ENCODE measurements at regions of chr17 and their contacts with region 1.

Region 1: DNA sequence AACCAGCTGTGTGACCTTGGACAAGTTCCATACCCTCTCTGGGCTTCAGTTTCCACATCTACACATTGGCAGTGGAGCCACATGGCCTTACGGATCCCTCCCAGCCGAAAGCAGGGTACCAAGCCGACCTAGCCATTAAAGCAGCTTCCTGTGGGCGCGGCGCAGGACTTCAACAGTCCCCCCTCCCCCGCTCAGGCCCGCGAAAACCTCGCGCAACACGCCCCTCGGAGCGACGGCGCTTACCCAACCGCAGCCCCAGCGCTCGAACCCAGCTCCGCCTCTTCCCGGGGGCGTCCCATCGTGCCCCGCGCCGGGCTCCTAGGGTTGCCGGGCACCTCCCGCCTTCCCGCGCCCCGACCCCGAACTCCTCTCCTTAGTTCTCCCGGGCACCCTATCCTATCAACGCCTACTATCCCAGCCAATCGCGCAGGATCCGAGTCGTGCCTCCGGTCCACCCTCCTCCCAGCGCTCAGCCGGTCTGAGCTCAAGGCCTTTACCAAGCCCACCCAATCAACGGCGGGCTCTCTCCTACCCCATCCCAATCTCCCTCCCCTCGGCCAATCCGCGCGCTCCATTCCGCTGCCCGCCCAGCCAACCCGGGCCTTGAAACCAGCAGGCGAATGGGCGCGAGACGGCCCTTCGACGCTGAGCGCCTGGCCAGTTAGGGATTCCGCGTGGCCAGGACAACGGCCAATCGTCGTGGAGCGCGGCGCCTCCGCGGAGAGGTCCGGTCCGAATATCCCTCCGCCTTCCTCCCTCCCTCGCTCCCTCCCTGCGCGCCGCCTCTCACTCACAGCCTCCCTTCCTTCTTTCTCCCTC is at the start of gene KPNB1:
- DNase-seq: peak; percentile 85 to 97 (median 97)
- ATAC-seq: peak; percentile 90
- H3K4me3 ChIP-seq: peak within 1 kb of the TSS; percentile 55
- H3K4me3 Mint-ChIP-seq: peak within 1 kb of the TSS; percentile 92 to 100 (median 99)
- H3K27ac ChIP-seq: peak within 1 kb of the TSS; percentile 80
- H3K27ac Mint-ChIP-seq: peak within 1 kb of the TSS; percentile 92 to 100 (median 98)
- H3K4me1 ChIP-seq: peaks cover 26 to 34% of the 10 kb centered on the region in 2 donors
- H3K4me1 Mint-ChIP-seq: peaks cover 40 to 67% (median 53%) of the 10 kb centered on the region in 7 donors
- H3K27me3 ChIP-seq: no peaks in the 10 kb centered on the region
- H3K27me3 Mint-ChIP-seq: no peaks in the 10 kb centered on the region
- total RNA-seq, gene KPNB1: 185 to 465 (median 255) TPM

Region 2: DNA sequence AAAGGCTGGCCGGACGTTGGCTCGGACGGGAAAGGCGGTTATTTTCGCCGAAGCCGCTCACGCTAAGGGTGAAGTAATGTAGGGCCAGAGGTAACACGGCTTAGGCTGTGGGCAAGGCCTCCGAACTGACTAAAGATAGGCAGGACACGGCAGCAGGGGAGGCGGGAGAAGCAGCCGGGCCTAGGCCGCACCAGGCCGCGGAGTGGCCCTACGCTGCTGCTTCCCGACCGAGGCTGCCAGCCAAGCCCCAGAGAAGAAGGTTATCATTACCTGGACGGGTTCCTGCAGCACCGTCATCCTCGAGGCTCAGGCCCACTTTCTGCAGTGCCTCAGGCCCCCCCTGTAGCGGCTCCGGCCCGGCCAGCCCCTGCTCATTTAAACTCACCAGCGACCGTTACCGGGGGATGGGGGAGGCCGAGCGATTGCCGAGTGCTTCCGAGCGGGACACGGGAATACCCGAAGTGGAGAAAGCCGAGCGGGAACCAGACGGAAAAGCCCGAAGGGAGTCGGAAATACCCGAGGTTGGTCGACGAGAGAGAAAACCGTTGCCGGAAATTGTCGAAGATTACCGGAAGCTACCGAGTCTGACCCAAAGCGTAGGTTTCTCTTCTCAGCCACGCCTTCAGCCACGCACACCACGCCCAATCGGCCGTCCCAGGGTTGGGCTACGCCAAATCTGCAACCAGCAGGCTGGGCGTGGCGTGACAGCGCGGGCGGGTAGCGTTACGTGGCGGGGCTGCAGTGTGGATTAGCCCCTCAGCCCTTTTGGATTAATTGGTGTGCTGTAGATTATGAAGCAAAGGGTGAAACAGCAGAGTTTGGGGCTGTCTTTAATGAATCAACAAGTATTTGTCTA is 460.3 kb before region 1 on chr17 and contains the start of gene CDC27:
- CTCF ChIA-PET with region 1: no interaction called
- POLR2A ChIA-PET with region 1: interaction called, 4 read pairs
- intact Hi-C with region 1: loop called in 1 of 2 experiments (anchors 2 kb)
- DNase-seq: peak; percentile 98 to 100 (median 99)
- ATAC-seq: peak; percentile 97
- H3K4me3 ChIP-seq: peak within 1 kb of the TSS; percentile 92
- H3K4me3 Mint-ChIP-seq: peak within 1 kb of the TSS; percentile 89 to 97 (median 94)
- H3K27ac ChIP-seq: peak within 1 kb of the TSS; percentile 95
- H3K27ac Mint-ChIP-seq: peak within 1 kb of the TSS; percentile 48 to 96 (median 94)
- H3K4me1 ChIP-seq: peaks cover 9 to 31% of the 10 kb centered on the region in 2 donors
- H3K4me1 Mint-ChIP-seq: peaks cover 34 to 59% (median 41%) of the 10 kb centered on the region in 7 donors
- H3K27me3 ChIP-seq: no peaks in the 10 kb centered on the region
- H3K27me3 Mint-ChIP-seq: no peaks in the 10 kb centered on the region
- total RNA-seq, gene CDC27: 47.4 to 98.3 (median 67.2) TPM

Region 3: DNA sequence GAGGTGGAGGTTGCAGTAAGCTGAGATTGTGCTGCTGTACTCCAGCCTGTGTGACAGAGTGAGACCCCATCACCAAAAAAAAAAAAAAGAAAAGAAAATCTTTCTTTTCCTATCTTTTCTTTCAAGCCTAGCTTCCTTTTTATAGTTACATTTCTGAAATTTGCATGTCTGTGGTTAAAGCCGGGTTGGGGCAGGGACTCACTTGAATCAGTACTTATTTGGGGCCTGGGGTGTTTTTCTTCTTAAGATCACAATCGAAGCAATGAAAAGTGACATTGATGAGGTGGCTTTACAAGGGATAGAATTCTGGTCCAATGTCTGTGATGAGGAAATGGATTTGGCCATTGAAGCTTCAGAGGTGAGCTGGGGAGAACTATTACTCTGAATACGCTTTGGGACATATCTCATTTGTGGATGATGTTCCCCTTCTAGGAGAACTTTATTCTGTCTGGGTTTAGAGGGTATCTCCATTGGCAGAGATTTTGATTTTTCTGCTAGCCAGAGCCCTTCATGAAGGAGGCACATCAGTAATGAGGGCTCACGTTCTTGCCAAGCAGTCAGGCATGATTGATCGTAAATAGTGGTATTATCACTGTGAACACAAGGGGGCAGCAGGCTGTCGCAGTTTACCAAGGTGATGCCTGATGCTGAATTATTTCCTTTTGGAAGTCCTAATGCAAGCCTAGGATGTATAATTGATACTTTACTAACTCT is 14.7 kb after region 1 on chr17:
- CTCF ChIA-PET with region 1: interaction called, 18 read pairs
- POLR2A ChIA-PET with region 1: interaction called, 92 read pairs
- intact Hi-C with region 1: loop called (anchors 1 kb)
- DNase-seq: peak; percentile 19 to 65 (median 56)
- ATAC-seq: peak; percentile 81
- H3K4me3 ChIP-seq: no peak overlapping the region
- H3K4me3 Mint-ChIP-seq: peak overlapping the region in 3 of 10 donors; percentile 1 to 38 (median 25)
- H3K27ac ChIP-seq: peak overlapping the region; percentile 5
- H3K27ac Mint-ChIP-seq: peak overlapping the region; percentile 25 to 92 (median 66)
- H3K4me1 ChIP-seq: peaks cover 8 to 15% of the 10 kb centered on the region in 2 donors
- H3K4me1 Mint-ChIP-seq: peaks cover 8 to 48% (median 22%) of the 10 kb centered on the region in 7 donors
- H3K27me3 ChIP-seq: no peaks in the 10 kb centered on the region
- H3K27me3 Mint-ChIP-seq: no peaks in the 10 kb centered on the region

Region 4: DNA sequence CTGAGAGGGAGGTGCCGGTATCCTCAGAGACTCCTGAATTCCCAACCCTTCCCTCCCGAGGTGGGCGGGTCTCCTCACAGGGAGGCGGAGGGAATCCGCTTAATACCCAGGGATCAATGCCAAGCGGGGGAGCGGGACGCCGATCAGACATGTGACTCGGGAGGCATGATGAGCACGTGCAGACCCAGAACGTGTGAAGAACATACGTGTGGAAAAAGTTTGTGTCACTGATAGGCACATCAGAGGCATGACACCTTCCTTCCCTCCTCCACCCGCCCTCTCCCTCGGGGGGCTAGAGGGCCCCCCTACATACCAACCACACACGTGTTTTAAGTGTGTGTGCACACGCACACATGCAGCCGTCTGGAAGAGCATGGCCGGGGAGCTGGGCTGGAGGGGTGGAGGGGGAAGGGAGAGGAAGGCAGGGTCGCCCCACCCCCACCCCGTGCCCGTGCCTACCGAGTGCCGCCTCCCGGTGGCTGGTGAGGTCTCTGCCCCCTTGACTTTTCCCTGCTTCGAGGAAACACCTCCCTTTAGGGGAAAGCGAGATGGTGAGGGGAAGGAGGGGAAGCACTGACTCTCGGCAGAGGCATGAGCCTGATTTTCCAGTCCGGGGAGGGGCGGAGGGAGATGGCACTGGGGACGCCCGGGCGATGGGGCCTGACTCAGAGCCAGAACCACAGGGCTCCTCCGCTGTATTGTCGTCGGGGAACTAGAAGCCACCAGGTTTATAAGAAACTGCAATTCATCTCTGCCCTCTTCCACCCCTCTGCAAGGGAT is 71.6 kb after region 1 on chr17:
- CTCF ChIA-PET with region 1: no interaction called
- POLR2A ChIA-PET with region 1: no interaction called
- intact Hi-C with region 1: no loop called
- DNase-seq: peak in 2 of 9 donors; percentile 69 to 93
- ATAC-seq: peak; percentile 69
- H3K4me3 ChIP-seq: peak overlapping the region; percentile 29
- H3K4me3 Mint-ChIP-seq: peak overlapping the region in 6 of 10 donors; percentile 53 to 64 (median 58)
- H3K27ac ChIP-seq: no peak overlapping the region
- H3K27ac Mint-ChIP-seq: peak overlapping the region in 5 of 9 donors; percentile 13 to 77 (median 70)
- H3K4me1 ChIP-seq: peaks cover 35 to 66% of the 10 kb centered on the region in 2 donors
- H3K4me1 Mint-ChIP-seq: peaks cover 18 to 74% (median 40%) of the 10 kb centered on the region in 7 donors
- H3K27me3 ChIP-seq: no peaks in the 10 kb centered on the region
- H3K27me3 Mint-ChIP-seq: peaks cover 0 to 7% (median under 1%) of the 10 kb centered on the region in 5 donors

Region 5: DNA sequence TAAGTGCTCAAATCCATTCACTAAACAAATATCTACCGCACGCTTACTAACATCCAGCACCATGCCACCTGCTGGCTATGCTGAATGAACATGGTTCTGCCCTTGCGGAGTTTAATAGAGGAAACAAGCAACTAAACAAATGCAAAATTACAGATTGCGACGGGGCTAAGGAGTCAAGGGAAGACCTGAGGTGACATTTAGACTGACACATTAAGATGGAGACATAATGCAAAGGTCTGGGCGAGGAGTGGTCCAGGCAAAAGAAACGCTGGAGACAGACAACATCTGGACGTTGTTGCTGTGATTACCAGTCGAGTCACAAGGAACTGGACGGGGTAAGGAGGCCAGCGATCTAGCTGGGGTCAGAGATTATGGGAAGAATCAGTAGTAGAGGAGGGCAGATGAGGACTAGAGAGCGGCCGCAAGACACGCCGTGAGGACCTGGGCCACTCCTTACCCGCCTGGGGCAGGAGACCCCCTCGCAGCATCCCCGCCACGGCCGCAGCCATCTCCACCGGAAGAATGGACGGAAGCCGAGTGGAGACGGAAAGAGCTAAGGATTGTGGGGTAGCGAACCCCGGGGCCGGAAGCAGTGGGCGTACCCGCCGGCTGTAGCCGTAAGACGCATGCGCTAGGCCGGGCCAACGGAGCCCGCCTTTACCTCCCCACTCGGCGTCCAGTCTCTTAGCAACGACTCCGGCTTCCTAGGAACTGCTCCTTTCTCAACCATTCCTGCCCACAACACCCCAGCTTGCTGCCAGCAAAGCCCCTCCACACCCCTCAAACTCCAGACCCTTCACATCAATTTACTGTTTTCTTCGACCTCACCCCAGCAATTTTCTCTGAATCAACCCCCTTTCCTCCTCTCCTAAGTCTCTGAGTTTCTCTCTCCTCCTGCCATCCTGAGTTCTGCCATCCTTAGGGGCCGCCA is 181.9 kb after region 1 on chr17 and contains the starts of genes LRRC46 and MRPL10:
- CTCF ChIA-PET with region 1: no interaction called
- POLR2A ChIA-PET with region 1: interaction called, 8 read pairs
- intact Hi-C with region 1: loop called in 1 of 2 experiments (anchors 1 kb)
- DNase-seq: peak; percentile 79 to 96 (median 91)
- ATAC-seq: peak; percentile 88
- H3K4me3 ChIP-seq: peak within 1 kb of the TSS; percentile 99
- H3K4me3 Mint-ChIP-seq: peak within 1 kb of the TSS; percentile 89 to 98 (median 92)
- H3K27ac ChIP-seq: peak within 1 kb of the TSS; percentile 77
- H3K27ac Mint-ChIP-seq: peak within 1 kb of the TSS; percentile 76 to 96 (median 92)
- H3K4me1 ChIP-seq: peaks cover 31 to 38% of the 10 kb centered on the region in 2 donors
- H3K4me1 Mint-ChIP-seq: peaks cover 34 to 79% (median 70%) of the 10 kb centered on the region in 7 donors
- H3K27me3 ChIP-seq: no peaks in the 10 kb centered on the region
- H3K27me3 Mint-ChIP-seq: no peaks in the 10 kb centered on the region
- total RNA-seq, gene LRRC46: 0.20 to 1.7 (median 0.66) TPM
- total RNA-seq, gene MRPL10: 33.6 to 51.2 (median 35.7) TPM

Region 6: DNA sequence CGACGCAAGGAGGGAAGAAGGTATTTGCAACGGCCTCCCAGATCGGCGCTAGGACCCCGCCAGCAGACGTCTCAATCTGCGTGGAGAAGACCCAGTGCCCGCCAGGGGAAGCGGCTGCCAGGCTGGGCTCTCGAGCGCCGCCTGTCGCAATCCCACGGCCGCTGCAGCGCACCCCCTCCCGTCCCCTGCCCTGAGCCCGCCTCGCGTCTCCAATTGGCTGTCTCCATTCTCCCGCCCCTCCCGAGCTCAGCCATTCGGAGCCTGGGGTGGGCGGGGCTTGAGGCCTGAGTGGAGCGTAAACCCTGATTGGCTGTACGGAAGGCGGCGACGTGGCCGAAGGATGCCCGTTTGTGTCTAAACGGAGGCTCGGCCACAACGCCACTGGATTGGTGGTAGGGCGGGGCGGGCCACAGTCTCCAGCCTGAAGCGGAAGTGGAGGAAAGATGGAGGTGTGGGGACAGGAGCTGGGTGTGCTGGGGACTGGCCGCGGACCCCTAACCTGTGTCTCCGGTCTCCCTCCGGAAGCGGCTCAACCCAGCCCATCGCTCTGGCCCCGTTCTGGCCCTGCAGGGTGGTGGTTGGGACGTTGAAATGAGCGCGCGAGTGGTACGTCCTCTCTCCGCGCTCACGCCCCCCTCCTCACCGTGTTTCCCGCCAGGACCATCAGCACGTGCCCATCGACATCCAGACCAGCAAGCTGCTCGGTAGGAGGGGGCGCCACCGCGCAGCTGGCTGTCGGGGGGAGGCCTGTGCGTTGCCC is 321.5 kb after region 1 on chr17 and contains the start of gene CDK5RAP3:
- CTCF ChIA-PET with region 1: no interaction called
- POLR2A ChIA-PET with region 1: no interaction called
- intact Hi-C with region 1: loop called (anchors 1 kb)
- DNase-seq: peak; percentile 93 to 99 (median 97)
- ATAC-seq: peak; percentile 100
- H3K4me3 ChIP-seq: peak within 1 kb of the TSS; percentile 96
- H3K4me3 Mint-ChIP-seq: peak within 1 kb of the TSS; percentile 95 to 100 (median 99)
- H3K27ac ChIP-seq: peak within 1 kb of the TSS; percentile 71
- H3K27ac Mint-ChIP-seq: peak within 1 kb of the TSS; percentile 83 to 96 (median 93)
- H3K4me1 ChIP-seq: peaks cover 6 to 12% of the 10 kb centered on the region in 2 donors
- H3K4me1 Mint-ChIP-seq: peaks cover 14 to 41% (median 26%) of the 10 kb centered on the region in 7 donors
- H3K27me3 ChIP-seq: no peaks in the 10 kb centered on the region
- H3K27me3 Mint-ChIP-seq: no peaks in the 10 kb centered on the region
- total RNA-seq, gene CDK5RAP3: 238 to 349 (median 276) TPM

Measured in naive thymus-derived CD4-positive, alpha-beta T cell (primary cell).